ENCODE measurements at regions of chr11 and their contacts with region 1.

Region 1: GRCh38 chr11:130580372-130580771 is 131.9 kb downstream of the ADAMTS15 start:
- DNase-seq: peak; percentile 98
- H3K4me3 ChIP-seq: no peak overlapping the region
- H3K27ac ChIP-seq: peak overlapping the region; percentile 96
- H3K4me1 ChIP-seq: peaks cover 38% of the 10 kb centered on the region
- H3K27me3 ChIP-seq: no peaks in the 10 kb centered on the region
- CTCF ChIP-seq: no peak

Region 2: DNA sequence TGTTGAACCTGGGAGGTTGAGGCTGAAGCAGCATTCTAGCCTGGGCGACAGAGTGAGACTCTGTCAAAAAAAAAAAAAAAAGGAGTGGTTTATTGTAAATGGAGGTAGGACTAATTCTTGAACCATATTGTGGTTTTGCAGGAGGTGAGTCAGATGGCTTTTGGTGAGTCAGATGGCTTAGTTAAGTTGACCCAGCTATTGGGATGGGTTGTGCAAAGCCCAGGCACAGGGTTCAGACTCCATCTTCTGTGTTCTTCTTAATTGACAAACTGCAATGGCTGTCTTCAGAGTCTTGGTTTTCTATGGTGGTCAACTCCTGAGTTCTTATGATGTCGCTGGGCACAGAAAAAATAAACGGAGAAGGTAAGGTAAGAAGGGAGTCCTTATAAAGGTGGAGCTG is 50.7 kb after region 1 on chr11:
- CTCF ChIA-PET with region 1: no interaction called
- dilution Hi-C with region 1: no loop called
- in situ Hi-C with region 1: no loop called
- intact Hi-C with region 1: loop called (anchors 2 kb)
- DNase-seq: peak; percentile 95
- H3K4me3 ChIP-seq: no peak overlapping the region
- H3K27ac ChIP-seq: peak overlapping the region; percentile 49
- H3K4me1 ChIP-seq: peaks cover 66% of the 10 kb centered on the region
- H3K27me3 ChIP-seq: no peaks in the 10 kb centered on the region
- CTCF ChIP-seq: no peak

Region 3: GRCh38 chr11:130677486-130678153 is 97.2 kb after region 1 on chr11:
- CTCF ChIA-PET with region 1: no interaction called
- dilution Hi-C with region 1: no loop called
- in situ Hi-C with region 1: no loop called
- intact Hi-C with region 1: loop called (anchors 2 kb)
- DNase-seq: peak; percentile 83
- H3K4me3 ChIP-seq: peak overlapping the region in 1 of 3 experiments; percentile 9
- H3K27ac ChIP-seq: peak overlapping the region; percentile 75
- H3K4me1 ChIP-seq: peaks cover 29% of the 10 kb centered on the region
- H3K27me3 ChIP-seq: no peaks in the 10 kb centered on the region
- CTCF ChIP-seq: no peak

Region 4: GRCh38 chr11:130827451-130828377 is 247.3 kb after region 1 on chr11:
- CTCF ChIA-PET with region 1: no interaction called
- dilution Hi-C with region 1: no loop called
- in situ Hi-C with region 1: no loop called
- intact Hi-C with region 1: loop called (anchors 1 kb)
- DNase-seq: peak; percentile 73
- H3K4me3 ChIP-seq: no peak overlapping the region
- H3K27ac ChIP-seq: no peak overlapping the region
- H3K4me1 ChIP-seq: no peaks in the 10 kb centered on the region
- H3K27me3 ChIP-seq: no peaks in the 10 kb centered on the region
- CTCF ChIP-seq: peak; percentile 65 to 80